ENCODE measurements at regions of chr5 and their contacts with region 1.

Region 1: DNA sequence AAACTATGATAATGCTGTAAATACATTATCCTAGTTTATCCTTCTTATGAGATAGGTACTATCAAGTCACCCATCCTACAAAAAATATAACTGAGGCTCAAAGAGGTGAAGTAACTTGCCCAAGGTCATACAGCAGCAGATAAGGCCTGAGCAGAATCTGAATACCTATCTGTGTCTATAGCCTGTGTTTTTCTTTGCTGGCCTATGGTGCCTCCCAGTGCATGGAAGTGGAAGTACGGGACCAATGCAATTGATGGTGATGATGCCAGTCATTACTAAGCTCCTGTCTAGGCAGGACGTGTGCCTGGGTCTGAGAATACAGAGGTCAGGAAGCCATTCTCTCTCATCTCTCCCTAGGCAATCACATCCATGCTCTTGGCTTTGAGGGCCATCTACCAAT is 67.8 kb downstream of the FAT2 start:
- DNase-seq: peak; percentile 55
- ATAC-seq: peak; percentile 93
- H3K4me3 ChIP-seq: no peak overlapping the region
- H3K27ac ChIP-seq: no peak overlapping the region
- H3K4me1 ChIP-seq: no peaks in the 10 kb centered on the region
- H3K27me3 ChIP-seq: peaks cover 4% of the 10 kb centered on the region; the same call in 1 of the 2 replicates
- CTCF ChIP-seq: peak; percentile 67
- POLR2A ChIP-seq: no peak
- RAD21 ChIP-seq: peak; percentile 81

Region 2: DNA sequence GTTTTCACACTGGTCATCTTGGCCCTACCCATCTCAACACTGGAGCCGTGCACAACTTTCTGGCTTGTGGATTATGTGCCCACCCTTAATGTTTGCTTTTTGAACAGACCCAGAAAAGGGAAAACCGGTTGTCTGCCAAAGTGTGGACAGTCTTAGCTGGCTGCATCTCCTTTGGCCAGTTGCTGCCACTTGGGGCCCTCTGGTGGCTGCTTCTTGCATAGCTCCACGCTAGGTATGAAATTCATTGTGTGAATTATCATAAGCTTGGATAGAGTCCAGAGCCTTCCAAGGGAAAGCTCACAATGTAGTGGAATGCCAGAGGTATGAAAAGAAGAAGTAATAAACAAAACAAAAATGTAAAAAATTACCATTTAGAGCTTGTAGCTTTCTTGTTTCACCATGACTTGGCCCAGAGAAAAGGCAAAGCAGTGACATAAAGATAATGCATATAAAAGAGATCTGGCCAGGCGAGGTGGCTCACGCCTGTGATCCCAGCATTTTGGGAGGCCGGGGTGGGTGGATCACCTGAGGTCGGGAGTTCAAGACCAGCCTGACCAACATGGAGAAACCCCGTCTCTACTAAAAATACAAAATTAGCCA is 207.2 kb before region 1 on chr5:
- CTCF ChIA-PET with region 1: interaction called, 6 read pairs
- POLR2A ChIA-PET with region 1: no interaction called
- dilution Hi-C with region 1: no loop called
- in situ Hi-C with region 1: no loop called
- intact Hi-C with region 1: loop called (anchors 5 kb)
- DNase-seq: peak; percentile 63
- ATAC-seq: peak; percentile 95
- H3K4me3 ChIP-seq: no peak overlapping the region
- H3K27ac ChIP-seq: no peak overlapping the region
- H3K4me1 ChIP-seq: no peaks in the 10 kb centered on the region
- H3K27me3 ChIP-seq: no peaks in the 10 kb centered on the region
- CTCF ChIP-seq: peak; percentile 81
- POLR2A ChIP-seq: no peak
- RAD21 ChIP-seq: peak; percentile 63

Region 3: GRCh38 chr5:151447174-151448037 is 75.9 kb before region 1 on chr5 and contains the start of gene SLC36A1:
- CTCF ChIA-PET with region 1: interaction called, 26 read pairs
- POLR2A ChIA-PET with region 1: no interaction called
- dilution Hi-C with region 1: no loop called
- in situ Hi-C with region 1: no loop called
- intact Hi-C with region 1: loop called (anchors 1 kb)
- DNase-seq: peak; percentile 86
- ATAC-seq: peak; percentile 90
- H3K4me3 ChIP-seq: peak within 1 kb of the TSS; percentile 74
- H3K27ac ChIP-seq: peak within 1 kb of the TSS; percentile 50
- H3K4me1 ChIP-seq: peaks cover 12% of the 10 kb centered on the region
- H3K27me3 ChIP-seq: peaks cover 2% of the 10 kb centered on the region; the same call in 1 of the 2 replicates
- CTCF ChIP-seq: peak; percentile 93
- POLR2A ChIP-seq: peak; percentile 41; the same call in 1 of the 2 replicates
- RAD21 ChIP-seq: peak; percentile 90
- total RNA-seq, gene SLC36A1: 5.3 and 5.7 TPM in 2 replicates

Region 4: GRCh38 chr5:151556806-151557205 is 33.5 kb after region 1 on chr5:
- CTCF ChIA-PET with region 1: no interaction called
- POLR2A ChIA-PET with region 1: no interaction called
- dilution Hi-C with region 1: no loop called
- in situ Hi-C with region 1: no loop called
- intact Hi-C with region 1: no loop called
- DNase-seq: no peak
- ATAC-seq: no peak
- H3K4me3 ChIP-seq: no peak overlapping the region
- H3K27ac ChIP-seq: no peak overlapping the region
- H3K4me1 ChIP-seq: no peaks in the 10 kb centered on the region
- H3K27me3 ChIP-seq: peaks cover 6% of the 10 kb centered on the region
- CTCF ChIP-seq: no peak
- POLR2A ChIP-seq: no peak
- RAD21 ChIP-seq: no peak

Measured in IMR-90 (cell line).